MCF 10A (cell line): ENCODE measurements at regions of chr14 and their contacts with region 1.

Region 1: DNA sequence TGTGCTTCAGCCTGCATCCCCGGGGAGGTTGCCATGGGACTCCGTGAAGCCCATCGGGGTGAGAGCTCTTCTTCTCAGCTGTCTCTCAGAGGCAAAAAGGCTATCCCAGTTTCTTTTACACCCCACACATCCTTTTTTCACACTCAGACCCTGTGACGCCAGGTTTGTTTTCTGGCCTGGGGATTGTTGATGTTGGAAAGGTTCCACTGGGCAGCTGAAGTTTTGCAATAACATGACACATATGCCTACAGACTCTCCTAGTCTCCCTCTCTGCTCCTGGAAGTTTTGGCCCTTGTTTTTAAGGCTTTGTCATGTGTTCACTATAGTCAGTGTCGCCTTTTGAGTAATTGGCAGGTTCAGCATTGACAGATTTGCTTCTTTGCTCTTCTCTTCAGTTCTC is 118.6 kb downstream of the SMOC1 start:
- DNase-seq: peak; percentile 98
- H3K4me3 Mint-ChIP-seq: no peak overlapping the region
- H3K27ac Mint-ChIP-seq: peak overlapping the region; percentile 95
- H3K4me1 Mint-ChIP-seq: peaks cover 47% of the 10 kb centered on the region
- H3K27me3 Mint-ChIP-seq: no peaks in the 10 kb centered on the region
- CTCF ChIP-seq: no peak

Region 2: GRCh38 chr14:69808919-69809808 is 188.7 kb before region 1 on chr14:
- CTCF ChIA-PET with region 1: no interaction called
- POLR2A ChIA-PET with region 1: no interaction called
- intact Hi-C with region 1: no loop called
- DNase-seq: no peak
- H3K4me3 Mint-ChIP-seq: no peak overlapping the region
- H3K27ac Mint-ChIP-seq: no peak overlapping the region
- H3K4me1 Mint-ChIP-seq: no peaks in the 10 kb centered on the region
- H3K27me3 Mint-ChIP-seq: no peaks in the 10 kb centered on the region
- CTCF ChIP-seq: no peak

Region 3: GRCh38 chr14:69879175-69880043 is 118.4 kb before region 1 on chr14 and contains the start of gene SMOC1:
- CTCF ChIA-PET with region 1: interaction called, 4 read pairs
- POLR2A ChIA-PET with region 1: interaction called, 12 read pairs
- intact Hi-C with region 1: loop called (anchors 1 kb)
- DNase-seq: peak; percentile 88
- H3K4me3 Mint-ChIP-seq: peak within 1 kb of the TSS; percentile 87
- H3K27ac Mint-ChIP-seq: peak within 1 kb of the TSS; percentile 61
- H3K4me1 Mint-ChIP-seq: peaks cover 40% of the 10 kb centered on the region
- H3K27me3 Mint-ChIP-seq: no peaks in the 10 kb centered on the region
- CTCF ChIP-seq: no peak
- total RNA-seq, gene SMOC1: 22.9 and 23.6 TPM in 2 replicates

Region 4: GRCh38 chr14:69887740-69888657 is 109.8 kb before region 1 on chr14:
- CTCF ChIA-PET with region 1: interaction called, 3 read pairs
- POLR2A ChIA-PET with region 1: interaction called, 5 read pairs
- intact Hi-C with region 1: loop called (anchors 1 kb)
- DNase-seq: peak; percentile 58
- H3K4me3 Mint-ChIP-seq: peak overlapping the region; percentile 12
- H3K27ac Mint-ChIP-seq: peak overlapping the region; percentile 44
- H3K4me1 Mint-ChIP-seq: peaks cover 41% of the 10 kb centered on the region
- H3K27me3 Mint-ChIP-seq: no peaks in the 10 kb centered on the region
- CTCF ChIP-seq: no peak

Region 5: GRCh38 chr14:69928111-69928523 is 69.7 kb before region 1 on chr14:
- CTCF ChIA-PET with region 1: no interaction called
- POLR2A ChIA-PET with region 1: no interaction called
- intact Hi-C with region 1: no loop called
- DNase-seq: peak; percentile 22
- H3K4me3 Mint-ChIP-seq: no peak overlapping the region
- H3K27ac Mint-ChIP-seq: no peak overlapping the region
- H3K4me1 Mint-ChIP-seq: no peaks in the 10 kb centered on the region
- H3K27me3 Mint-ChIP-seq: no peaks in the 10 kb centered on the region
- CTCF ChIP-seq: no peak

Region 6: GRCh38 chr14:69985456-69985855 is 12.4 kb before region 1 on chr14:
- CTCF ChIA-PET with region 1: interaction called, 6 read pairs
- POLR2A ChIA-PET with region 1: interaction called, 6 read pairs
- intact Hi-C with region 1: loop called (anchors 1 kb)
- DNase-seq: peak; percentile 78
- H3K4me3 Mint-ChIP-seq: no peak overlapping the region
- H3K27ac Mint-ChIP-seq: peak overlapping the region; percentile 63
- H3K4me1 Mint-ChIP-seq: peaks cover 27% of the 10 kb centered on the region
- H3K27me3 Mint-ChIP-seq: no peaks in the 10 kb centered on the region
- CTCF ChIP-seq: no peak

Region 7: DNA sequence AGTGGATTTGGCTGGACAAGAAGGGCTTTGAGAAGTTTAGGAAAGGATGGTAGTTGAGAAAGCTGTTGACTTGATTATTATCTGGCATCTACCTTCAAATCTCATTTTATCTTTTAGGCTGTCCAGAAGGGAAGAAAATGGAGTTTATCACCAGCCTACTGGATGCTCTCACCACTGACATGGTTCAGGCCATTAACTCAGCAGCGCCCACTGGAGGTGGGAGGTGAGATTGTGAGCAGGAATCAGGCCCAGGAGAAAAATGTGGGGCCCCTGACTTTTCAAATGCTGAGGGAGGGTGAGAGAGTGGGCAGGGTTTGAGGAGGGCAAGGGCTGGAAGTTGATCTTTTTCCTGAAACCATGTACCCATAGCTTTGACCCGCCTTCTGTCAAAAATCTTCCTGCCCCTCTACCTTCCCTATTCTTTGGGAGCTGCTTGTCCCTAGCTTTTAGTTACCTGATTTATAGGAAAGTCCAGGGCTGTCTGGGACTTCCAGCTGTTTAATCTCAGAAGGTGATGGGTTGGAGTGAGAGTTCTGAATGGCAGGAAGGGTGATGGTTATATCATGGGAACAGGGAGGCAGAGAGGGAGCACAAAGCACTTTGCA is 15.5 kb after region 1 on chr14:
- CTCF ChIA-PET with region 1: interaction called, 4 read pairs
- POLR2A ChIA-PET with region 1: interaction called, 66 read pairs
- intact Hi-C with region 1: no loop called
- DNase-seq: peak; percentile 75
- H3K4me3 Mint-ChIP-seq: no peak overlapping the region
- H3K27ac Mint-ChIP-seq: peak overlapping the region; percentile 28
- H3K4me1 Mint-ChIP-seq: peaks cover 17% of the 10 kb centered on the region
- H3K27me3 Mint-ChIP-seq: no peaks in the 10 kb centered on the region
- CTCF ChIP-seq: peak; percentile 83

Region 8: DNA sequence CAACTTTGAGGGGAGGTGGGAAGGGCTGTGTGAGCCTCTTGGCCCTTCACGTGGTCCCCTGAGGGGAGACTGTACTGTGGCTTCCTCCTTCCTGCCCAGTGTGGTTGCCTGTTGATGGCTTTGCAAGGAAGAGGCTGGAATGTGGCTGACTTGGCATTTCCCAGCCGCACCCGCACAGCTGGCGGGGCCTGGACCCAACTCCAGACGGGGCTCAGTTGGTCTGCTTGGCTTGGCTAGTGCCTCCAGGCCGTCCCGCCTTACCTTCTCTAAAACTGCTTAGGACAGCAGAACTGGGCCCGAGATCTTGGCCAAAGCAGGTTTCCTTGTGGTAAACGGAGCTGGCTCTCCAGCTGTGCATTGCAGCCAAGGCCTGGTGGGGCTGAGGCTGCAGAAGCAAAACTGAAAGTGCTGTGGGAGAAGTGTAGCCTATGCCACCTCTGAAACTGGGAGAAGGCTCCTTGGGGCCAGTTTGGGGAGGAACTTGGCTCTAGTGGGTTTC is 20.9 kb after region 1 on chr14:
- CTCF ChIA-PET with region 1: interaction called, 4 read pairs
- POLR2A ChIA-PET with region 1: interaction called, 66 read pairs
- intact Hi-C with region 1: no loop called
- DNase-seq: peak; percentile 19
- H3K4me3 Mint-ChIP-seq: no peak overlapping the region
- H3K27ac Mint-ChIP-seq: peak overlapping the region; percentile 40
- H3K4me1 Mint-ChIP-seq: peaks cover 17% of the 10 kb centered on the region
- H3K27me3 Mint-ChIP-seq: no peaks in the 10 kb centered on the region
- CTCF ChIP-seq: no peak